IMR-90 (cell line): ENCODE measurements at regions of chr10 and their contacts with region 1.

Region 1: DNA sequence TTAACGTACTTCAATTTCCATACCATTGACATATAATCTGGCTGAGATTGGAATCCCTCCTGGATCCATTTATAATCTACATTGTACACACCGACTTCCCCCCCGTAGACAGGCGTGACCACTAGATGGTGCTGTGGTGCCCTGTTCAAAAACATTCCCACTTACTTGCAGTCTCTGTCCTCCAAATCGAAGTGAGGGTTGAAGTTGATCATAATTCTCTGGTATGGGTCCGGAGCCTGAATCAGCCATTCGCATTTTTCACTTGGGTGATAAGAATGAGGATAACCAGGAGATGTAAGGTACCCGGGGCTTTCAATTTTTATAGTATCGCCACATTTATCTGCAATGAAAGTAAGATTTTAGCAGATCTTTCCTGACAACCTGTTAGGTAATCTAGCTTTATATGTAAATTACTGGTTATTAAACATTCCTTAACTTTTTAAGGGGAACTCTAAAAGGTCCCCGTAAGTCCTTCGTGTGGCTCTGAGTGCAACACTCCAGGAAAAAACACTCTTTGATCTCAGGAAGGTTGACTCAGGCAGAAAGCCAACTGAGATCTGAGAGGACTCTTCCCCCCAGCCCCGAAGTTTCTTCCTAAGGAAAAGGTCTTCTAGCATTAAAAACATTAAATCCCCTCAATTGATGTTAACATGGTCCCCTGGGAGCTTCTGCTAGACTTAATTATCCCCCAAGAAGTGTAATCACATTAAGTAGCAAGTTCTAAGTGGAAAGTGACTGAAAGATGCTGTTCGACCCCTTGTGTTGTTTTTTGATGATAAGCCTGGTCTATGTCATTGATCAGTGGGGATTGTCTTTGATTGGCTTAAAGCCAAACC is 3.7 kb downstream of the NRP1 start:
- DNase-seq: peak; percentile 90
- ATAC-seq: peak; percentile 27
- H3K4me3 ChIP-seq: peak overlapping the region; percentile 85; the same call in 1 of the 2 replicates
- H3K27ac ChIP-seq: peak overlapping the region; percentile 35; the same call in 1 of the 2 replicates
- H3K4me1 ChIP-seq: peaks cover 8% of the 10 kb centered on the region; the same call in 1 of the 2 replicates
- H3K27me3 ChIP-seq: no peaks in the 10 kb centered on the region
- CTCF ChIP-seq: peak; percentile 92
- POLR2A ChIP-seq: no peak
- RAD21 ChIP-seq: peak; percentile 95

Region 2: DNA sequence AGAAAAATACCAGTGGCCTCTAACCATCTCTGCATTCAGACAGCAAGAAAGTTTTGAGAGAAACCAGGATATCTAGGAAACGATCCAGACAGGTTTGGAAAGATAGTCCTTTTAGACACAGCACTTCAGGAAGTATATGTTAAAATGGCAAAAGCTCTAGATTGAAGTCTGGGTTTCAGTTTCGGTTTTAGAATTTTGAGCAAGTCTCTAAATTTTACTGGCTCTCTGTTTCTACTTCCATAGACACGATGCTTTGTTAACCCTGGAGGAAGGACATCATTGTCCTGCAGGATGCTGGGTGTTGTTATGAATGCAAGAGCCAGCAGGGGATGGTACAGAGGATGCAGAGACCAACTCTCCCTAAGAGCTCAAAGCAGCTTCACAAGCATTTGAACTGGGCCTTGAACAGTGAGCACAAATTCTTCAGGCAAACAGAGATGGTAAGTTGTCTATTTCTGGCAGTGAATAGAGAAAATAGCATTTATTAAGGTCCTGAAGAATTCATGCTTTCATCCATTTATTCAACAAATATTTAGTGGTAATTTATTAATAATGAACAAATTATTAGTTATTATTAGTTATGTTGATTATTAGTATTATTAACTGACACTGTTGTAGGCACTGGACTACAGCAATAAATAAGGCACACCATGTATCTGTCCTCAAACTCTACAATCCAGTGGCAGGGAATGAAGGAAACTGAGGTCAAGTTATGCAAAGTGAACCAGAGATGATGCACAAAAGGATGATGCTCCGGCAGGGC is 156.4 kb after region 1 on chr10:
- CTCF ChIA-PET with region 1: no interaction called
- POLR2A ChIA-PET with region 1: no interaction called
- dilution Hi-C with region 1: no loop called
- in situ Hi-C with region 1: no loop called
- intact Hi-C with region 1: loop called (anchors 5 kb)
- DNase-seq: peak; percentile 9
- ATAC-seq: peak; percentile 53
- H3K4me3 ChIP-seq: no peak overlapping the region
- H3K27ac ChIP-seq: no peak overlapping the region
- H3K4me1 ChIP-seq: peaks cover 4% of the 10 kb centered on the region; the same call in 1 of the 2 replicates
- H3K27me3 ChIP-seq: peaks cover 2% of the 10 kb centered on the region; the same call in 1 of the 2 replicates
- CTCF ChIP-seq: 0 out of 2 replicates have a peak, but pooled peaks have one; percentile 12
- POLR2A ChIP-seq: no peak
- RAD21 ChIP-seq: no peak

Region 3: DNA sequence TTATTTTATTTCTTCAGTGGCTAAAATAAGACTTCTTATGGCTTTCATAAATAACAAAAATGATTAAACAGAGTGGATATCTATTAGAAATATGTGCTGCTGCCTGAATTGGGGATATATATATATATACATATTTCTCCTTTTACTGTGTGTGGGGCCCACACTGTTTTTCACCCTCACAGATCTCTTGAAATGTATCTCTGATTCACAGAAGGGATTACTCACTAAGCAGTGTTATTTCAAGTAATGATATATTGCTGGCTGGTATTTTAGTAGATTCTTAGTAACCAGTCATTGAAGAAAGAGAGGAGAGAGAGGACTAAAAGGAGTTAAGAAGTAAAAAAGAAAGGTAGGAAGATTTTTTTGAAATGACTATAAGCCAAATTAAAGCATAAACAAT is 312.3 kb after region 1 on chr10:
- CTCF ChIA-PET with region 1: no interaction called
- POLR2A ChIA-PET with region 1: interaction called, 3 read pairs
- dilution Hi-C with region 1: no loop called
- in situ Hi-C with region 1: no loop called
- intact Hi-C with region 1: loop called (anchors 10 kb)
- DNase-seq: peak; percentile 87
- ATAC-seq: peak; percentile 95
- H3K4me3 ChIP-seq: no peak overlapping the region
- H3K27ac ChIP-seq: no peak overlapping the region
- H3K4me1 ChIP-seq: no peaks in the 10 kb centered on the region
- H3K27me3 ChIP-seq: peaks cover 14% of the 10 kb centered on the region
- CTCF ChIP-seq: no peak
- POLR2A ChIP-seq: no peak
- RAD21 ChIP-seq: no peak

Region 4: GRCh38 chr10:33801748-33802147 is 471.0 kb after region 1 on chr10:
- CTCF ChIA-PET with region 1: no interaction called
- POLR2A ChIA-PET with region 1: no interaction called
- dilution Hi-C with region 1: no loop called
- in situ Hi-C with region 1: no loop called
- intact Hi-C with region 1: loop called (anchors 10 kb)
- DNase-seq: peak; percentile 25
- ATAC-seq: no peak
- H3K4me3 ChIP-seq: no peak overlapping the region
- H3K27ac ChIP-seq: no peak overlapping the region
- H3K4me1 ChIP-seq: no peaks in the 10 kb centered on the region
- H3K27me3 ChIP-seq: no peaks in the 10 kb centered on the region
- CTCF ChIP-seq: no peak
- POLR2A ChIP-seq: no peak
- RAD21 ChIP-seq: no peak

Region 5: DNA sequence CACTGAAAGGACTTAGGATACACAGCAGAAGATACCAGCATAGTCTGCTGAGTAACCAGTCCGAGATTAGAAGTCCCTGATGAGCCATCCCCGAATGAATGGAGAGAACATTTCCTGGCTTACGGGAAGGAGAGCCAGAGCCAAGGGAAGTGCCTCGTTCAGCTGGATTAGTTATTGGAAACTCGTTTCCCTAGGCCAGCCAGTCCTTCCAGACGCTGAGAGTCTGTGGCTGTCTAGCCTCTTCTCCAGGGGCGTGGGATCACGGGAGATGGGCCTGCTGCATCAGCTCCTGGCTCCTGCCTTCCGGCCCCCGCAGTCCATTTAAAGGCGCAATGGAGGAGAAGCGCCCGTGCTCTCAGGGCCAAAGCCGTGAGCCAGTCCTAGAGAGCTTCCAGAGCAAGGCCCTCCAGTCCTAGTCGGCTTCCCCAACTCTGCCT is 771.5 kb after region 1 on chr10:
- CTCF ChIA-PET with region 1: no interaction called
- POLR2A ChIA-PET with region 1: no interaction called
- dilution Hi-C with region 1: no loop called
- in situ Hi-C with region 1: loop called (anchors 25 kb)
- intact Hi-C with region 1: loop called (anchors 1 kb)
- DNase-seq: peak; percentile 78
- ATAC-seq: peak; percentile 66
- H3K4me3 ChIP-seq: no peak overlapping the region
- H3K27ac ChIP-seq: peak overlapping the region; percentile 91
- H3K4me1 ChIP-seq: peaks cover 13% of the 10 kb centered on the region
- H3K27me3 ChIP-seq: no peaks in the 10 kb centered on the region
- CTCF ChIP-seq: no peak
- POLR2A ChIP-seq: no peak
- RAD21 ChIP-seq: no peak

Region 6: GRCh38 chr10:34384372-34384771 is 1053.6 kb after region 1 on chr10:
- CTCF ChIA-PET with region 1: no interaction called
- POLR2A ChIA-PET with region 1: no interaction called
- dilution Hi-C with region 1: no loop called
- in situ Hi-C with region 1: no loop called
- intact Hi-C with region 1: loop called (anchors 10 kb)
- DNase-seq: no peak
- ATAC-seq: no peak
- H3K4me3 ChIP-seq: no peak overlapping the region
- H3K27ac ChIP-seq: no peak overlapping the region
- H3K4me1 ChIP-seq: no peaks in the 10 kb centered on the region
- H3K27me3 ChIP-seq: no peaks in the 10 kb centered on the region
- CTCF ChIP-seq: no peak
- POLR2A ChIP-seq: no peak
- RAD21 ChIP-seq: no peak

Region 7: DNA sequence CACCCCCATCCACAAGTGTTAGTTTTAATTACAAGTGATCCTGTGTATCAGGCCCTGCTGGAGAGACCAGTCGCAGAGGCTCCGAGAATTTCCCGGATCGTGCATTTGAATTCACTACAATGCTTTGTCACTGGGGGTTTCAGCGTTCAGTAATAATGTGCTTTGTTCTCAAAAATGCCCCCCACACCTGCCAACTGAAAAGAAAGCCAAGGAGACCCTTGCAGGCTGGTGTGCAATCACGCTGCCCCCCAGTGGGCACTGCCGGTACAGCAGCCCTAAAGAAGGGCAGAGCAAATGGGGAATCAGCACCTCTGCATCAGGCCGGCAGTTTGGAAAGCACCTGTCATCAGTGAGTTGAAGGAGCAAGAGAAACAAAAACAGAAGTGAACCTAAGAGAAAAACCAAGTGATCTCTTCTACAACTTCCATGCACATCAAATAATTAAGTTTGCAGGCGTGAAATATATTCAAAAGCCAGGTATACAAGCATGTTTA is 1306.7 kb after region 1 on chr10:
- CTCF ChIA-PET with region 1: interaction called, 4 read pairs
- POLR2A ChIA-PET with region 1: no interaction called
- dilution Hi-C with region 1: no loop called
- in situ Hi-C with region 1: loop called (anchors 5 kb)
- intact Hi-C with region 1: loop called (anchors 1 kb)
- DNase-seq: peak; percentile 23
- ATAC-seq: peak; percentile 79
- H3K4me3 ChIP-seq: no peak overlapping the region
- H3K27ac ChIP-seq: no peak overlapping the region
- H3K4me1 ChIP-seq: no peaks in the 10 kb centered on the region
- H3K27me3 ChIP-seq: no peaks in the 10 kb centered on the region
- CTCF ChIP-seq: peak; percentile 86
- POLR2A ChIP-seq: no peak
- RAD21 ChIP-seq: peak; percentile 87